ENCODE measurements at regions of chr9 and their contacts with region 1.

Region 1: GRCh38 chr9:123871781-123872180 is 58.1 kb downstream of the DENND1A start:
- DNase-seq: no peak
- ATAC-seq: peak; percentile 16; the same call in 1 of the 3 replicates
- H3K4me3 ChIP-seq: no peak overlapping the region
- H3K27ac ChIP-seq: no peak overlapping the region
- H3K4me1 ChIP-seq: peaks cover 13% of the 10 kb centered on the region
- H3K27me3 ChIP-seq: no peaks in the 10 kb centered on the region
- CTCF ChIP-seq: no peak
- EP300 ChIP-seq: no peak
- POLR2A ChIP-seq: no peak
- RAD21 ChIP-seq: no peak

Region 2: GRCh38 chr9:123033864-123034601 is 837.7 kb before region 1 on chr9:
- CTCF ChIA-PET with region 1: no interaction called
- POLR2A ChIA-PET with region 1: no interaction called
- RAD21 ChIA-PET with region 1: no interaction called
- SMC1A ChIA-PET with region 1: no interaction called
- in situ Hi-C with region 1: no loop called
- intact Hi-C with region 1: no loop called
- DNase-seq: no peak
- ATAC-seq: no peak
- H3K4me3 ChIP-seq: no peak overlapping the region
- H3K27ac ChIP-seq: no peak overlapping the region
- H3K4me1 ChIP-seq: no peaks in the 10 kb centered on the region
- H3K27me3 ChIP-seq: no peaks in the 10 kb centered on the region
- CTCF ChIP-seq: no peak
- EP300 ChIP-seq: no peak
- POLR2A ChIP-seq: no peak
- RAD21 ChIP-seq: no peak

Region 3: GRCh38 chr9:123883634-123884033 is 11.9 kb after region 1 on chr9:
- CTCF ChIA-PET with region 1: interaction called, 5 read pairs
- POLR2A ChIA-PET with region 1: interaction called, 5 read pairs
- RAD21 ChIA-PET with region 1: no interaction called
- SMC1A ChIA-PET with region 1: interaction called, 12 read pairs
- in situ Hi-C with region 1: no loop called
- intact Hi-C with region 1: no loop called
- DNase-seq: no peak
- ATAC-seq: no peak
- H3K4me3 ChIP-seq: no peak overlapping the region
- H3K27ac ChIP-seq: no peak overlapping the region
- H3K4me1 ChIP-seq: peaks cover 6% of the 10 kb centered on the region
- H3K27me3 ChIP-seq: no peaks in the 10 kb centered on the region
- CTCF ChIP-seq: no peak
- EP300 ChIP-seq: no peak
- POLR2A ChIP-seq: no peak
- RAD21 ChIP-seq: no peak

Region 4: DNA sequence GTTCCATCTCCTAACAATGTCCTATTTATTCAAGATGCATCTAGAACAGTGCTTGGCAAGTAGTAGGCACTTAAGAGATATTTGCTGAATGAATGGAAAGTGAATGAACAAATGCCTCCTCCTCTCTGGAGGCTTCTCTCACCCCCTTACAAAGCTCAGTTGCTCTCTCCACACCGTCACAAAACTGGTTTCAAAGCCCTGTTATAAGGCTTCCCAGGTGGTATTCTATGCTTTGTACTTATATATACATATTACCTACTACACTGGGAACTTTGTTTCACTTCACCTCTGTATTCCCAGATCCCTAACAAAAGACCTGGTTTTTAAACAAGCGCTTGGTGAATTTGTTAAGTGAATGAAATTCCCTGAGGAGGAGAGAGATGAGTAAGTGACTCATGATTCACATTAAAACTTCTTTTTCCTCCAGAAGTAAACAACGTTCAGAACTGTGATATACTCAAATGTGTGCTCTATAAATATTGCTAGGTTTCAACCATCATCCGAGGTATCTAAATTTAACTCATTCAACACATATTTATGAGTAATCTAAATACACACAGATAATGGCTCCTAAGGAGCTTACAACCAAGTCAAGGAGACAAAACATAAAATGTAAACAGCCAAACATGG is 22.2 kb after region 1 on chr9:
- CTCF ChIA-PET with region 1: interaction called, 3 read pairs
- POLR2A ChIA-PET with region 1: interaction called, 7 read pairs
- RAD21 ChIA-PET with region 1: interaction called, 4 read pairs
- SMC1A ChIA-PET with region 1: interaction called, 10 read pairs
- in situ Hi-C with region 1: no loop called
- intact Hi-C with region 1: no loop called
- DNase-seq: no peak
- ATAC-seq: peak; percentile 44
- H3K4me3 ChIP-seq: no peak overlapping the region
- H3K27ac ChIP-seq: peak overlapping the region; percentile 24; the same call in 1 of the 2 replicates
- H3K4me1 ChIP-seq: peaks cover 41% of the 10 kb centered on the region
- H3K27me3 ChIP-seq: no peaks in the 10 kb centered on the region
- CTCF ChIP-seq: no peak
- EP300 ChIP-seq: 0 out of 4 replicates have a peak, but pooled peaks of 1 of the 2 experiments have one; percentile 9
- POLR2A ChIP-seq: no peak
- RAD21 ChIP-seq: no peak

Region 5: DNA sequence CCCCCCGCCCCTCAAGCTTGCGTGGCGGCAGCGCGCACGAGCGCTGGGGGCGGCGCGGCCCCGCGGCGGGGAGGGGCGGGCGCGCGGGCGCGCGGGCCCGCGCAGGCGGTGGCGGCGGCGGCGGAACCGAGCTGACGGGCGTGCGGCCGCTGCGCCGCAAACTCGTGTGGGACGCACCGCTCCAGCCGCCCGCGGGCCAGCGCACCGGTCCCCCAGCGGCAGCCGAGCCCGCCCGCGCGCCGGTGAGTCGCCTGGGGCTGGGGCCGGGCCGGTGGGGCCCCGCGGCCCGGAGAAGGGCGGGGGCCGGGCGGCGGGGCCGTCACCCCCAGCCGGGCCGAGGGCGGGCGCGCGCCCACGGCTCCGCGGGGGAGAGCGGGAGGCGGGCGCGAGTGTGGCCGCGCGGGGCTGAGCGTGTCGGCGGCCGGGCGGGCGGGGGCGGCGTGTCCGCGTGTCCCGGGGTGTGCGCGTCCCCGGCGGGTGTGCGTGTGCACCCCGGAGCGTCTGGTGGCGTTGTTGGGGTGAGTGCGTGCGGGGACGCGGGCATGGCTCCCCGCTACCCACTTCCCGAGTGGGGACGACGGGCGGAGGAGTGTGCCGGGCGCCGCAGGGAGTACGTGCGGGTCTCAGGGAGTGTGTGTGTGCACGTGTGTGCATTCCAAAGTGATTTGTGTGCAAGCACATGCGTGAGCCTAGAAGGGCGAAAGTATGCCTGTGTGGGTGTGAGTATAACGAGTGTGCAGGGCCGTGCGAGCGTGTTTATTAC is 386.2 kb after region 1 on chr9 and contains the start of gene NEK6:
- CTCF ChIA-PET with region 1: no interaction called
- POLR2A ChIA-PET with region 1: no interaction called
- RAD21 ChIA-PET with region 1: no interaction called
- SMC1A ChIA-PET with region 1: no interaction called
- in situ Hi-C with region 1: no loop called
- intact Hi-C with region 1: no loop called
- DNase-seq: no peak
- ATAC-seq: peak; percentile 2
- H3K4me3 ChIP-seq: peak within 1 kb of the TSS; percentile 95
- H3K27ac ChIP-seq: peak within 1 kb of the TSS; percentile 88
- H3K4me1 ChIP-seq: peaks cover 35% of the 10 kb centered on the region
- H3K27me3 ChIP-seq: no peaks in the 10 kb centered on the region
- CTCF ChIP-seq: no peak
- EP300 ChIP-seq: no peak
- POLR2A ChIP-seq: peak; percentile 72
- RAD21 ChIP-seq: no peak
- polyA plus RNA-seq, gene NEK6: 31.3 to 33.2 TPM

Measured in GM12878 (cell line).